ENCODE measurements at regions of chr14 and their contacts with region 1.

Region 1: GRCh38 chr14:67487937-67488893 is at the start of gene TMEM229B:
- DNase-seq: peak; percentile 70
- ATAC-seq: no peak
- total RNA-seq, gene TMEM229B: 4.2 TPM

Region 2: DNA sequence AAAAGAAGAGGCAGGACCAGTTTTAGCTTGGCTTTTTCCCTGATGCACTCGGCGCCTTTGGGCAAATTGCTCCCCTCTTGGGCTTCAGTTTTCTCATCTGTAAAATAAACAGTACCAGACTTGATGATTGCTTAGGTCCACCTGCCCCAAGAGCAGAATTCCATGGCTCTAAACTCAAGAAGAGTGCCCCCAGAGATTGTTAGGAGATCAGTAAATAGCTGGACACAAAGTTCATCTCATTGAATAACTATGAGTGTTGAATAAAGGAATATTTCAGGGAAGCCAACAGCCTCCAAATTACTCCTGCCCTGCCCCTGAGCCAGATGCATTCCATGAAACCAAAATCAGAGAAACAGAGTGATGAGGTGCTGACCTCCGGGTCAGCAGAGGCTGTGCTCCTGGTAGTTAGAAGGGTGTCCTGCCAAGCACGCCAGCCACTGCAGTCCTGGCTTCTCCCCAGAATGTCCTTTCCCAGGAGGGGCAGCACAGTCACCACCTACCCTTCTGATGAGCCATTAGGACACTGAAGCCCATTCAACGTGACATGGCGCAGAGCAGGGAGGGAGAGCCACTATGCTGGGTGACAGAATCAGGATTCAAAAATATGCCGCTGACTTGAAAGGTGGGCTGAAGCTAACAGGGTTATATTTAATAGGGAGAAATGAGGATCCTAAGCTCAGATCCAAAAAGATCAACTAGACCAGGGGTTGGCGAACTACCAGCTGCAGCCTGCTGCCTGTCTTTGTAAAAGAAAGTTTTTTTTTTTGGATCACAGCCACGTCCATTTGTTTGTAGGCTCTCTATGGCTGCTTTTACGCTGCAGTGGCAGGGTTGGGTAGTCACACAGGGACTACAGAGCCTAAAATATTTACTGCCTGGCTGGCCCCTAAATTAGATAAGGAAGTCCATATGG is 41.8 kb before region 1 on chr14:
- intact Hi-C with region 1: loop called (anchors 5 kb)
- DNase-seq: no peak
- ATAC-seq: peak; percentile 80

Region 3: GRCh38 chr14:67746927-67747326 is 258.7 kb after region 1 on chr14:
- intact Hi-C with region 1: no loop called
- DNase-seq: no peak
- ATAC-seq: no peak

Measured in Right ventricle myocardium inferior (tissue), 1 donor.